ENCODE measurements at regions of chr22 and their contacts with region 1.

Region 1: GRCh38 chr22:46035742-46036557 is 59.0 kb upstream of the WNT7B start:
- DNase-seq: peak; percentile 100
- H3K4me3 ChIP-seq: peak overlapping the region; percentile 88 to 91
- H3K27ac ChIP-seq: peak overlapping the region; percentile 89 to 95
- H3K4me1 ChIP-seq: peaks cover 0 to 35% of the 10 kb centered on the region in 2 experiments; a peak in 3 of 4 replicates
- H3K27me3 ChIP-seq: no peaks in the 10 kb centered on the region
- CTCF ChIP-seq: no peak
- EP300 ChIP-seq: no peak
- RAD21 ChIP-seq: no peak

Region 2: DNA sequence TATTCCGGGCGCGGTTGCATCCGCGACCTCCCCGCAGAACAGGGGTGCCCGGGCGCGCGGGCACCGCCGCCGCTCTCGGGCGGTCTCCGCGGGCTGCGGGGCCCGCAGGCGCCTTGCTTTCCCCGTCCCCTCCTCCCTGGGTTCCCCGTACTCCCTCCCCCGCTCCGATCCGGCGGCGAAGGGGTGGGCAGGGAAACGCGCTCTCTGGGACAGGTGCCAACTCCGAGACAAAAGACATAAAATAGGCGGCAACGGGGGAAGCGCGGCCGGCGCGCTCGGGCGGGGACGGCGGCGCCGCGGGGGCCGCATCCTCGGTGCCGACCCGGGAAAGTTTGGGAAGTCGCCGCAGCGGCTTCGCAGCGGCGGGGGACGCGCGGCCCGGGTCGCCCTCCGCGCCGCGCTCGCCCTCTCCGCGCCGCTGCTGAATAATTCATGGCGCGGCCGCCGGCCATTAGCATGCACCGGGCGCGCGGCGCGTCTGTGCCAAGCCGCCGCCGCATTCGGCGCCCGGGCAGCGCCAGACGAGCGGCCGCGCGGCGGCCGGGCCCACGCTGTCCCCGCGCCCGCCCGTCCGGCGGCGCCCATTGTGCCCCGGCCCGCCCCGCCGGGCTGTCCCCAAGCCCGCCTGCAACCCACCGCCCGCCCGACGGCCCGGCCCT is 35.6 kb after region 1 on chr22:
- CTCF ChIA-PET with region 1: interaction called, 5 read pairs
- POLR2A ChIA-PET with region 1: interaction called, 16 read pairs
- DNase-seq: peak; percentile 88
- H3K4me3 ChIP-seq: peak overlapping the region; percentile 90 to 92
- H3K27ac ChIP-seq: peak overlapping the region; percentile 96 to 100
- H3K4me1 ChIP-seq: peaks cover 6 to 33% of the 10 kb centered on the region in 2 experiments; a peak in 3 of 4 replicates
- H3K27me3 ChIP-seq: no peaks in the 10 kb centered on the region
- CTCF ChIP-seq: no peak
- EP300 ChIP-seq: peak; percentile 15 to 57; a peak in 1 of 4 replicates
- RAD21 ChIP-seq: no peak; the same call in 1 of the 2 replicates

Region 3: DNA sequence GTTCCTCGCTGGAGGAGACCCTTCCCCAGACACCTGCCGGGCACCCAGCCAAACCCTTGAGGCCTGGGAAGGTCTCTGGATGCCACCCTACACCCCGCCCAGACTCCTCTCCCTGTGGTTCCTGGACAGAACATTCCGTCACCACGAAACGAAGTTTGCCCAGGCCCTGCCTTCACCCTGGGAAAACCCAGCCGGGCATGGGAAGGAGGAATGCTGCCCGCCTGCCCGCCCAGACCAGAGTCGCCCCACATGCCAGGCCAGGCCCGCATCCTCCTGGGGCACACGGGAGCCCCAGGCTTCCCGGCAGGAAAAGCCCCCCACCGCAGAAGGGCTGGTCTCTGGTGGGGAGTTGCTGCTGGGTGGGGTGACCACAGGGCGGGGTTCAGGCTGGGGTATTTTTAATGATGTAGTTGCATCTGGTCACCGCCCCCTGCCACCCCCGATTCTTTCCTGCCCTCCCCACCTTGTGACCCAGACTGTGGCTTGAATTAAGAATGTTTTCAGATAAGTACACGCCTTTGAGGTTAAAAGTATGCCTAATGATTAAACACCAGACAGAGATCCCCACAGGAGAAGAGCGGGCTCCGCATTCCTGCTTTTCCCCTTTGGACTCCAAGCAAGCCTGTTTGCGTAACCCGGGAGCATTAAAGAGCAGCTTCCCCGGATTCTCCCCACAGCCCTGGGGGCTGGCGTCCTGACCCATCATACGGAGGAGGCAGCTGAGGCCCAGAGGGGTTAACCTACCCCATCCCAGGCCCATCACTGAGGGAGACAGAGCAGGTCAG is 69.7 kb after region 1 on chr22:
- CTCF ChIA-PET with region 1: no interaction called
- POLR2A ChIA-PET with region 1: no interaction called
- DNase-seq: no peak
- H3K4me3 ChIP-seq: no peak overlapping the region
- H3K27ac ChIP-seq: peak overlapping the region; percentile 60 to 98
- H3K4me1 ChIP-seq: peaks cover 43 to 93% of the 10 kb centered on the region in 2 experiments
- H3K27me3 ChIP-seq: no peaks in the 10 kb centered on the region
- CTCF ChIP-seq: no peak
- EP300 ChIP-seq: no peak
- RAD21 ChIP-seq: no peak

Measured in SK-N-SH (cell line).